ENCODE measurements at regions of chr3 and their contacts with region 1.

Region 1: GRCh38 chr3:24299806-24300626 is 194.6 kb downstream of the THRB start:
- DNase-seq: no peak
- ATAC-seq: no peak
- H3K4me3 ChIP-seq: no peak overlapping the region
- H3K27ac ChIP-seq: peak overlapping the region in 3 of 4 donors; percentile 14 to 36 (median 25)
- H3K4me1 ChIP-seq: peaks cover 39 to 42% of the 10 kb centered on the region in 2 donors
- H3K27me3 ChIP-seq: no peaks in the 10 kb centered on the region
- CTCF ChIP-seq: no peak
- POLR2A ChIP-seq: no peak

Region 2: DNA sequence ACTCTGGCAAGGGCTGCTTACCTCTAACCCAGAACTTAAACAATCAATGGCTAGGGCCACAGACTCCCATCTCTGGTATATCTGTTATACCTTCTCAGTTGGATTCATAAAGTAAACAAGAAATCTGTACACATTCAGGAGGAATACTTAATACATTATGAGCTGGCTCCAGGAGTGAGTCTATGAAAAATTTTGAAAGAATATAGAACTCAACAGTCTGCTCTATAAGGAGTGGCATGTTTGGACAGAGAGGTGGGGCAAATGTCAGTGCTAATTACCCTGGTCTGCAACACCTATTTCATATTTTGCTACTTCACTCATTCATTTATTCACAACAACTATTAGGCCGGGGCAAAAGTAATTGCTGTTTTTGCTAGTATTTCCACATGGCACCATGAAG is 50.5 kb before region 1 on chr3:
- in situ Hi-C with region 1: no loop called
- intact Hi-C with region 1: no loop called
- DNase-seq: no peak
- ATAC-seq: no peak
- H3K4me3 ChIP-seq: no peak overlapping the region
- H3K27ac ChIP-seq: no peak overlapping the region
- H3K4me1 ChIP-seq: peaks cover 0 to 15% of the 10 kb centered on the region in 2 donors
- H3K27me3 ChIP-seq: no peaks in the 10 kb centered on the region
- CTCF ChIP-seq: no peak
- POLR2A ChIP-seq: no peak

Region 3: DNA sequence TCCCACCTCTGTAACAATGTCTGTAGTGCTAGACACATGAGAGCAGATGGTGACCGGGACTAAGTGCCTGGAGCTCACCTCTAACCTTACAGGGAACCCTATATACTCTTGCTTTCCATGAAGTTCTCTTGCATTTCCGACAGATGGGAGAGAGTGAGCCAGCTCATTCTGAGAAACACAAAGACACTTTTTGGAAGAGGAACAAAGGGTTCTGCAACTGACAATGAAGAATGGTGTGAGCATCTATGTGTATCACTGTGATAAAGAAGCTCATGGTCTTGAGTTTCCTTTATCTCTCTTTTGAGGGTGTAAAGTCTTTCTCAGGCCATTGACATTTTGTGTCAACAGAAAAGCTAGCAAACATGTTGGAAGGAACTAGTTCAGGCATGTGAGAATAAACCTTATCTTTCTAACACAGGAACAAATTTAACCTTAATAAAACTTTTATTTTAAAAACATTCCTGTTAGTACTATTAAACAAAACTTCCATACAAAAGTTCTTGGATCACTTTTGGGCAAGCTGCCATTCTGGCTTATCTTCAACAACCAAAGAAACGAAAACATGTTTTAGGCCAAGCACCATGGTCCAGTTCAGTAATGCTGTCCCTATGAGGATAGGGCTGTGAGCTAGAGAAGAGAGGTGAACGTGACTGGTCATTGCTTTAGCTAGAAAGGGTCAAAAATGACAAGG is 51.9 kb after region 1 on chr3:
- in situ Hi-C with region 1: no loop called
- intact Hi-C with region 1: loop called (anchors 5 kb)
- DNase-seq: peak in 1 of 2 donors; percentile 12
- ATAC-seq: peak; percentile 64 to 65
- H3K4me3 ChIP-seq: no peak overlapping the region
- H3K27ac ChIP-seq: peak overlapping the region; percentile 28 to 61 (median 38)
- H3K4me1 ChIP-seq: peaks cover 32 to 33% of the 10 kb centered on the region in 2 donors
- H3K27me3 ChIP-seq: no peaks in the 10 kb centered on the region
- CTCF ChIP-seq: no peak
- POLR2A ChIP-seq: no peak

Region 4: GRCh38 chr3:24377218-24377993 is 77.4 kb after region 1 on chr3:
- in situ Hi-C with region 1: no loop called
- intact Hi-C with region 1: loop called (anchors 5 kb)
- DNase-seq: peak; percentile 17 to 61
- ATAC-seq: peak; percentile 62 to 64
- H3K4me3 ChIP-seq: no peak overlapping the region
- H3K27ac ChIP-seq: peak overlapping the region in 3 of 4 donors; percentile 43 to 76 (median 50)
- H3K4me1 ChIP-seq: peaks cover 55 to 87% of the 10 kb centered on the region in 2 donors
- H3K27me3 ChIP-seq: no peaks in the 10 kb centered on the region
- CTCF ChIP-seq: no peak
- POLR2A ChIP-seq: no peak